Transverse colon (tissue), 4 donors: ENCODE measurements at regions of chr6 and their contacts with region 1.

Region 1: GRCh38 chr6:108558372-108559096 is 2.2 kb upstream of the FOXO3 start:
- DNase-seq: peak; percentile 99
- H3K4me3 ChIP-seq: peak overlapping the region; percentile 72 to 98 (median 88)
- H3K27ac ChIP-seq: peak overlapping the region; percentile 98 to 100 (median 99)
- H3K4me1 ChIP-seq: peaks cover 8 to 39% (median 24%) of the 10 kb centered on the region in 4 donors
- H3K27me3 ChIP-seq: no peaks in the 10 kb centered on the region
- CTCF ChIP-seq: no peak
- EP300 ChIP-seq: peak; percentile 77
- POLR2A ChIP-seq: no peak

Region 2: GRCh38 chr6:108655806-108656651 is 97.5 kb after region 1 on chr6:
- in situ Hi-C with region 1: loop called in 1 of 4 experiments (anchors 25 kb)
- intact Hi-C with region 1: loop called (anchors 2 kb)
- DNase-seq: no peak
- H3K4me3 ChIP-seq: peak overlapping the region in 1 of 4 donors; percentile 10
- H3K27ac ChIP-seq: peak overlapping the region; percentile 70 to 87 (median 82)
- H3K4me1 ChIP-seq: peaks cover 39 to 85% (median 54%) of the 10 kb centered on the region in 4 donors
- H3K27me3 ChIP-seq: no peaks in the 10 kb centered on the region
- CTCF ChIP-seq: no peak
- EP300 ChIP-seq: peak; percentile 60
- POLR2A ChIP-seq: no peak